GM10248 (cell line): ENCODE measurements at regions of chr1 and their contacts with region 1.

Region 1: DNA sequence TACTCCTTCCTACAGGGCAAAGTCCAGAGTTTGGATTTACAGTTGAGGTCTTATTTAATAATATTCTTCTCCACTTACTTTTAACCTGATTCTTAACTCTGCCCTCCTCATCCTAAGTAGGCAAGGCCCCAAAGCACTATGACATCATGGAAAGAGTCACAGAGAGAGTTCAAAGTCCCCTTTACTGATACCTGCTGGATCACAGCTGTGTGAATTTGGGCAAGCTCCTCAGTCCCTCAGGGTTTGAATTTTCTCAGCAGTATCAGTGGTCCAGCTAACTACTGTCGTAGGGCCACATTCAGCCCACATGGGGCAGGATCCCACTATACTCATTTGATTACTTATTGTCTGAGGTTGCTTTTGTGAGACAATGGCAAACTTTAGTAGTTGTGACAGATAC is 16.0 kb downstream of the TYW3 start:
- DNase-seq: peak; percentile 32
- CTCF ChIP-seq: no peak

Region 2: GRCh38 chr1:74733604-74734484 is 15.1 kb before region 1 on chr1:
- CTCF ChIA-PET with region 1: interaction called, 16 read pairs
- POLR2A ChIA-PET with region 1: no interaction called
- DNase-seq: peak; percentile 53
- CTCF ChIP-seq: peak; percentile 68